T-cell (primary cell): ENCODE measurements at regions of chrX and their contacts with region 1.

Region 1: GRCh38 chrX:151753313-151754041 is 18.9 kb downstream of the CNGA2 start:
- DNase-seq: no peak
- ATAC-seq: no peak
- H3K4me3 ChIP-seq: no peak overlapping the region
- H3K4me3 Mint-ChIP-seq: no peak overlapping the region
- H3K27ac ChIP-seq: no peak overlapping the region
- H3K27ac Mint-ChIP-seq: no peak overlapping the region
- H3K4me1 ChIP-seq: no peaks in the 10 kb centered on the region
- H3K4me1 Mint-ChIP-seq: no peaks in the 10 kb centered on the region
- H3K27me3 ChIP-seq: peaks cover 0 to 12% of the 10 kb centered on the region in 2 experiments
- H3K27me3 Mint-ChIP-seq: peaks cover 10 to 47% of the 10 kb centered on the region in 2 donors

Region 2: DNA sequence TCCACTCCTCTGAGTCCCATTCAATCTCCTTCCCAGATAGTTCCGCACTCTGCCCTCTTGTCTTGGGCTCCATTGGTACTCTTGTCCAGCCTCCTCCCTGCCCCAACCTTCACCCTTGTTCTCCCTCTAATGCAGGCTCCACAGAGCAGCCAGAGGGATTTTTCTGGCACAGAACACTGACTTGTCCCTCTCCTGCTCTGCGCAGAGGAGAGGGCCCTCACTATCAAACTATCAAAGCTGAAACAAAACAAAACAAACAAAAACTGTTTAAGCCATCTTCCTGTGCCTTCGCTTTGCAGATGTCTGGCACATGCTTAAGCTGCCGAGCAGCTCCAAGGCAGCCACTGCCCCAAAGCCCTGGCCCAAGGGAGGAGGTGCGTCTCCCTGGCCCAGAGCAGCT is 16.0 kb before region 1 on chrX:
- CTCF ChIA-PET with region 1: interaction called in 1 of 2 experiments, 10 read pairs
- POLR2A ChIA-PET with region 1: interaction called, 3 read pairs
- DNase-seq: no peak
- ATAC-seq: no peak
- H3K4me3 ChIP-seq: no peak overlapping the region
- H3K4me3 Mint-ChIP-seq: no peak overlapping the region
- H3K27ac ChIP-seq: no peak overlapping the region
- H3K27ac Mint-ChIP-seq: no peak overlapping the region
- H3K4me1 ChIP-seq: no peaks in the 10 kb centered on the region
- H3K4me1 Mint-ChIP-seq: no peaks in the 10 kb centered on the region
- H3K27me3 ChIP-seq: peaks cover 0 to 6% of the 10 kb centered on the region in 2 experiments
- H3K27me3 Mint-ChIP-seq: peaks cover 11 to 33% of the 10 kb centered on the region in 2 donors

Region 3: DNA sequence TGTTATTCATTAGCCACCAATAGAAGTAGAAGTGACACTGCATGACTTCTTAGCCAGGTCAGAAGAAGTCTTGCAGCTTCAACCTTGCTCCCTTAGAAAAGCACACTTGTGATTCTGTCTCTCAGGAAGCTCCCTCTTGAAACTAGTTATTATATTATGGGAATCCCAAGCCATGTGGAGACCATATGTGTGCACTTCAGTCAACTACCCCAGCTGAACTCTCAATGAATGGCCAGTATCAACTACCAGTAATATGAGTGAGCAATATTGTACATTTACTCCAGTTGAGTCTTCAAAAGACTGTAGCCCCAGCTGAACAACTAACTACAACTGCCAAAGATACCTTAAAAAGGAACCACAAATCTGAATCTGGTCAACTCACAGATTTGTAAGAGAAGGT is 774.7 kb after region 1 on chrX:
- CTCF ChIA-PET with region 1: no interaction called
- POLR2A ChIA-PET with region 1: no interaction called
- DNase-seq: no peak
- ATAC-seq: no peak
- H3K4me3 ChIP-seq: no peak overlapping the region
- H3K4me3 Mint-ChIP-seq: no peak overlapping the region
- H3K27ac ChIP-seq: no peak overlapping the region
- H3K27ac Mint-ChIP-seq: no peak overlapping the region
- H3K4me1 ChIP-seq: no peaks in the 10 kb centered on the region
- H3K4me1 Mint-ChIP-seq: no peaks in the 10 kb centered on the region
- H3K27me3 ChIP-seq: no peaks in the 10 kb centered on the region
- H3K27me3 Mint-ChIP-seq: no peaks in the 10 kb centered on the region